ENCODE measurements at regions of chr19 and their contacts with region 1.

Region 1: DNA sequence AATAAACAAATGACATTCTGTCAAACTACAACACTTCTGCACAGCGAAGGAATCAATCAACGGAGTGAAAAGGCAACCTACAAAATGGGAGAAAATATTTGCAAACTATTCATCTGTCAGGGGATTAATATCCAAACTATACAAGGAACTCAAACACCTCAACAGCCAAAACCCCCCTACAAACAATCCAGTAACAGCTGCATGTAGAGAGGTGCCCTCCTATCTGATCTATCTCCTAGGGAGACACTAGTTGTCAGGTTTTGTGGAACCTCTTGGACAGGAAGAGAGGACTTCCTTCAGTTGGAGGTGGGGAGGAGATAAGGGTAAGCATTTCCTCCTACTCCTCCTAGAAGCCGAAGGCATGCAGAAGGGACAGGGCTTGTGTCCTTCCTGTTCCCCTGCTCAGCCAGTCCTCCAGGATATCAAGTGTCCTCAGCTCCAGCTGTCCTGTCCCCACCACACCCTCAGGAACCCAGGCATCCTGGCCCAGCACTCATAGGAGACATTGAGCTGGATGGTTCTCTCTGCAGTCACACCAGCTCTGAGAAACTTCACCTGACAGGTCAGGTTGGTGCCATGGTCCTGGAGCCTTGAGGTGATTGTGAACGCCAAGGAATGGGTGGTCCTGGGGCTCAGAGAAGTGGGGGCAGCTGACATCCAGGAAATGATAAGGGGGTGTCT is 9.8 kb upstream of the SIGLEC8 start:
- DNase-seq: no peak
- ATAC-seq: no peak

Region 2: DNA sequence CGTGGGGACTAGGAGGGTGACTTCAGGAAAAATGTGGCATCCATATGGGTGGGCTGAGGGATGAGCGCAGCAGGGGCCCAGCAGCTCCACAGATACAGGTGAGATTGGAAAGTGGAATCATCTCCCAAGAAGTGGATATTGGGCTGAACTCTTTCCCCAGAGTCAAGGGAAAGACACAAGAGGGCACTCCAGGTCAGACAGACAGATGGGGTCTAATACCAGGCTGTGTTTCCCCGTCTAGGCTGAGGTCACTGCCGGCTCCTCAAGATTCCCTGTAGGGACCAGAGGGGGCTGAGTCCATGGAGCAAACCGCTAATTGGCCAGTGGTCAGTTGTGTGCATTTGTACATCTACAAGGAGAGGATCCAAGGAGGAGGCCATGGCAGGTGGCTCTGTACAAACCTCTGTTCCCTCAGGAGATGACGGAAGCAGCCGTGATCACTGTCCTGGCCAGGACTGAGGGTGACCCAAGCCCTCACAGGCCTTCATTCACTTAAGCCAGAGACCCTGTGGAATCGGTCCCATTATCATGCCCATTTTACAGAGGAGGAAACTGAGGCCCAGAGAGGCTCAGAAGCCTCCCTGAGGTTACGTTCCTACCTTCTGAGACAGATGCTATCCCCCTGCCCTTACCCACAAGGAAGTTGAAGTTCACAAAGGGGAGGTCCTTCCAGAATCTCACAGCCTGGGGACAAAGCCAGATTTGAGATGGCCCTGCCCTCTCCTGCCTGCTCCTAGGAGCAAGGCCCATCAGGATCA is 171.5 kb before region 1 on chr19:
- intact Hi-C with region 1: no loop called
- DNase-seq: no peak
- ATAC-seq: no peak

Region 3: DNA sequence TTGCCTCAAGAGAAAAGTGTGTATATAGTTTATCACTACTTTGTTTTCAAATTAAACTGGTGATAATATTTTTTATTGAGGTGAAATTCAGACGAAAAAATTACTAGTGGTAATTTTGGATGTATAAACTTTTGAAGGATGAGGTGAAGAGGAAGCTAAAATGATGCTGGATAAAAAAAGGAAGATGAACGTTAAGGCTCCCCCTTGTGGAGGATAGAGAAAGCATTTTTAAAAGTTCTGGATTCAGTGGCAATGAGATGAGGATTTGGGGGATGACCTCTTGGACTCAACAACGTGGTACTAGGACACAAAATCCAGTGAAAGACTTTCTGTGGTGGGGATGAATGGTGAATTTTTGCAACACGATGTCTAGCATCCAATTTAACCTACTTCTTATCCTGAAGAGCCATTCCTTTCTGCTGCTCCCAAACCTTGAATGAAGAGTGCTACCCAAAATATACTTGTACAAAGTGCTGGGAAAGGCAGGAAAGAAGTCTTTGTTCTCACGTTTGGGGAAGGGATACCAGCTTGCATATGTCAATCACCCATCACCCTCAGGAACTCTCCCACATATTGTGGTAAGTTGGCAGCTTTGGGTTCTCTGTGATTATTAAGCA is 169.5 kb after region 1 on chr19:
- intact Hi-C with region 1: no loop called
- DNase-seq: no peak
- ATAC-seq: no peak

Region 4: DNA sequence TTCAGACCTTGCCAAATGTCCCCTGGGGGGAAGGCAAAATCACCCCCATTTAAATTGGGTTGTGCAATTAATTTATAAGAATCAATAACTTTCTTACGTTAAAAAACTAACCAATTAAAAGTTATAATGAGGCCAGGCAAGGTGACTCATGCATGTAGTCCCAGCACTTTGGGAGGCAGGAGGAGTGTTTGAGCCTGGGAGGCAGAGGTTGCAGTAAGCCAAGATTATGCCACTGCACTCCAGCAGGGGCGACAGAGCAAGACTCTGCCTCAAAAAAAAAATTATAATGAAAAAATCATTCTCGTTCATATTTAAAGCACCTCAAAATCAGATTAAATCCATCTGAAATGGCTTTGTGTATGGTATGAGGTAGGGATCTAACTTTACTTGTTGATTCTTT is 197.0 kb after region 1 on chr19:
- intact Hi-C with region 1: loop called (anchors 5 kb)
- DNase-seq: no peak
- ATAC-seq: no peak